Brain microvascular endothelial cell (primary cell): ENCODE measurements at regions of chr12 and their contacts with region 1.

Region 1: DNA sequence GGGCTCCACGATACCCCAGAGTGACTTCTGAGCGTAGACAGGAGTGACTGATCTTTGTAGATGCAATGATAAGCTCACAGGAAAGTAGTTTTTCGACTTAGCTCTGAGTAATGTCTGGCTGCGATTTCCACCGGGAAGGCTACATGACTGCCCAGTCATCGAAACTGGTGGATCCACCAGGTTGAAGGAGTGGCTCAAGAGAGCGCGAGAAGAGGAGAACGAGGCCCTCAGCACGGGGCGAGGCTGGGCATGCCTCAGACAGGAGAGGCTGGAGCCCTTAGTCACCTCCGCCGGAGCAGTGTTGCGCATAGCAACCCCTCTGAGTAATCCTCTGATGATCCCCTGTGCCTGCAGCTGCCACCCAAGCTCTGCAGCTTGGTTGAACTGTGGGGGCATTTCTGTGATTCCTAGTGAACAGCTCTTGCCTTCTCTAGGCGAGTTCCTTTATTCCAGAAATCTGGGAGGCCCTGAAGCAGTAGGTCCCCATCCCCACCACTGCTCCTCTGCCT is 25.6 kb downstream of the ELK3 start:
- DNase-seq: peak; percentile 98
- H3K4me3 ChIP-seq: no peak overlapping the region
- H3K27ac ChIP-seq: peak overlapping the region; percentile 92
- H3K27me3 ChIP-seq: no peaks in the 10 kb centered on the region
- CTCF ChIP-seq: no peak

Region 2: GRCh38 chr12:96034621-96035277 is 185.0 kb before region 1 on chr12:
- in situ Hi-C with region 1: no loop called
- DNase-seq: peak; percentile 14
- H3K4me3 ChIP-seq: peak overlapping the region; percentile 98
- H3K27ac ChIP-seq: peak overlapping the region; percentile 10
- H3K27me3 ChIP-seq: no peaks in the 10 kb centered on the region
- CTCF ChIP-seq: no peak

Region 3: DNA sequence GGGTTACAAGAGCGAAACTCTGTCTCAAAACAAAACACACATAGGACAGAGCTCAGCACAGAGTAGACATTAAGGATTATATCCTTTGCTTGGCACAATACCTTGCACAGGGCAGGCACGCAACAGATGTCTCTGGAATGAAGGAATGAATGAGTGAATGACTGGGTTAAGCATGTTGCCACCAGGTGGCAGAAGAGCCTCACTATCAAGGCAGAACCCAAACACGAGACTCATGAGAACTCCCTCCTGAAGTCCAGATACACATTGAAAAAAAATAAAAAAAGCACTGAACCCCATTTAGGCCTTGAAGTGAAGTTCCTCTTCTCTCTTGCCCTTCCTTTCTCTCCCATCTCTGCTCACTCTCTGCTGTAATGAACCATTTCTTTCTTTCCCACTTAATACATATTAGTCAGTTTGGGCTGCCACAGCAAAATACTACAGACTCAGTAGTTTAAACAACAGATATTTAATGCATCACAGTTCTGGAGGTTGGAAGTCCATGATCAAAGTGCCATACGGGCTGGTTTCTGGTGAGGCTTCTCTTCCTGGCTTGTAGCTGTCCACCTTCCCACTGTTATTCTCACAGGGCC is 157.8 kb before region 1 on chr12:
- in situ Hi-C with region 1: loop called (anchors 25 kb)
- DNase-seq: peak; percentile 84
- H3K4me3 ChIP-seq: no peak overlapping the region
- H3K27ac ChIP-seq: no peak overlapping the region
- H3K27me3 ChIP-seq: no peaks in the 10 kb centered on the region
- CTCF ChIP-seq: peak; percentile 84